CD4-positive, alpha-beta memory T cell (primary cell): ENCODE measurements at regions of chr17 and their contacts with region 1.

Region 1: DNA sequence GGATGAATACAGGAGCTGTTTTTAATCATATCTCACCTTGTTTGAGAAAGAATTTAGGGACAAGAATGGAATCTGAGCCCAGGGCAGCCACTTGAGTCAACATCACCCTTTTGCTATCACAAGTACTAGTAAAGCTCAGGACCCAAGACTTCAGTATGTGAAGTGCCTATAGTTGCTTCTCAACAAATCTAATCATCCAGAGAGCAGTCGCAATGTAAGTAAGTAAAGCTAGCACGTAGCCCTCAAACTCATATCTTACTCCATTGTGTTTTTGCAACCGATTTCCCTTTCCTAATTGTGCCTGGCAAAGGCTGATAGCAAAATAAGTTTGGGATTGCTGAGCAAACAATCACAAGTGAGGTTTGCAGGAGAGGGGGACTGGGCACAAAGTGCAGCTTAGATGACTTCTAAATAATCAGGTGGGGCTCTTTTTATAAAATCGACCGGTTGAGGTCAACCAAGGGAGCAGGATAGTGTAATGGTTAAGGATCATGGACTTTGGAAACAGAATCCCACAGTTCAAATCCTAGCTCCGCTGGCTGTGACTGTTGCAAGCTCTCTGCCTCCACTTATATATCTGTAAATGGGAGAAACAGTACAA is 13.0 kb downstream of the TOB1 start:
- DNase-seq: no peak
- H3K4me3 ChIP-seq: no peak overlapping the region
- H3K4me3 Mint-ChIP-seq: peak overlapping the region in 6 of 8 donors; percentile 70 to 87 (median 84)
- H3K27ac ChIP-seq: no peak overlapping the region
- H3K27ac Mint-ChIP-seq: peak overlapping the region; percentile 47 to 97 (median 92)
- H3K4me1 ChIP-seq: peaks cover 15% of the 10 kb centered on the region
- H3K4me1 Mint-ChIP-seq: peaks cover 12 to 20% (median 15%) of the 10 kb centered on the region in 4 donors
- H3K27me3 ChIP-seq: no peaks in the 10 kb centered on the region
- H3K27me3 Mint-ChIP-seq: no peaks in the 10 kb centered on the region

Region 2: DNA sequence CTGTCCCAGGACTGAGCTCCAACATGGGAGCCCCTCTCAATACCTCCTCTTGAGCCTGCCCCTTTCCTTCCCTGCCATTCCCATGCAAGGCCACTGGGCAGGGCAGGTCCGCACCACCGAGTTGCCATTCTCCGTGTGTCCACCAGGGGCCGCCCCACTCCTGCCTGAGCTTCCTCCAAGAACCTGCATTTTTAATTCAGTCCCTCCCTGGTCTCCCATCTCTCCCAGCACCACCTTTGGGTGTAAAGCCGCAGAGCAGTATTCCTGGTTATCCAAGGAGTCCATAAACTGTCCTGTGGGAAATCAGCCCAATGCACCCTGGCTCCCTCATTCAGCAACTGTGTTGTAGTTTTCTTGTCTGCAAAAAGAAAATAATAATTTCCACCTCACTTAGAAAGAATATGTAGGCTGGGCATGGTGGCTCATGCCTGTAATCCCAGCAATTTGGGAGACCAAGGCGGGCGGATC is 69.9 kb before region 1 on chr17:
- CTCF ChIA-PET with region 1: interaction called, 20 read pairs
- POLR2A ChIA-PET with region 1: no interaction called
- intact Hi-C with region 1: no loop called
- DNase-seq: peak; percentile 70 to 76 (median 72)
- H3K4me3 ChIP-seq: no peak overlapping the region
- H3K4me3 Mint-ChIP-seq: peak overlapping the region in 4 of 8 donors; percentile 45 to 75 (median 62)
- H3K27ac ChIP-seq: no peak overlapping the region
- H3K27ac Mint-ChIP-seq: peak overlapping the region in 3 of 7 donors; percentile 31 to 78 (median 43)
- H3K4me1 ChIP-seq: peaks cover 29% of the 10 kb centered on the region
- H3K4me1 Mint-ChIP-seq: peaks cover 20 to 42% (median 31%) of the 10 kb centered on the region in 4 donors
- H3K27me3 ChIP-seq: no peaks in the 10 kb centered on the region
- H3K27me3 Mint-ChIP-seq: peaks cover 5% of the 10 kb centered on the region in 2 donors

Region 3: DNA sequence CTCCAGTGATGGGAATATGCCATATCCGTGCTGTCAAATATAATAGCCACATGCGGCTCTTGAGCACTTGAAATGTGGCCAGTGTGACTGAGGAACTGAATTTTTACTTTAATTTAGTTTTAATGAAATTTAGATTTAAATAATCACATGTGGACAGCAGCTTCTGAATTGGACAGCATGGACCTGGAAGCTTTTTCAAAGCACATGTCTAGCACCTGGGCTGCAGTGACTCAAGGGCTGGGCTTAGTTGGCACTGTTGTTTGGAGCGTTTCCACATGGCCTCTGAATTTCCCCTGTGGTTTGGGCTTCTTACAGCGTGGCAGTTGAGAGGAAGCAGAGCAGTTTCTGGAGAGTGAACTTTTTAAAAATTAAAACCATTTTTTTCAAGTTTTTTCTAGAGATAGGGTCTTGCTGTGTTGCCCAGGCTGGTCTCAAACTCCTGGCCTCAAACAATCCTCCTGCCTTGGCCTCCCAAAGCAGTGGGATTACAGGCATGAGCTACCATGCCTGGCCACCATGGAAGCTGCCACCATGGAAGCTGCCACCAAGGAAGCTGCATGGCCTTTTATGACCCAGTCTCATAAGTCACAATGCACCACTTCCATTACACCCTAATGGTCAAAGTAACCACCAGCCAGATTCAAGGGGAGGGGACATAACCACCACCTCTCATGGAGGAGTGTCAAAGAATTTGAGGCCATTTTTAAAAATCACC is 19.8 kb after region 1 on chr17:
- CTCF ChIA-PET with region 1: interaction called, 102 read pairs
- POLR2A ChIA-PET with region 1: interaction called, 218 read pairs
- intact Hi-C with region 1: no loop called
- DNase-seq: peak; percentile 41 to 83 (median 52)
- H3K4me3 ChIP-seq: no peak overlapping the region
- H3K4me3 Mint-ChIP-seq: peak overlapping the region in 6 of 8 donors; percentile 8 to 76 (median 46)
- H3K27ac ChIP-seq: no peak overlapping the region
- H3K27ac Mint-ChIP-seq: peak overlapping the region in 5 of 7 donors; percentile 13 to 92 (median 42)
- H3K4me1 ChIP-seq: peaks cover 53% of the 10 kb centered on the region
- H3K4me1 Mint-ChIP-seq: peaks cover 30 to 53% (median 45%) of the 10 kb centered on the region in 4 donors
- H3K27me3 ChIP-seq: no peaks in the 10 kb centered on the region
- H3K27me3 Mint-ChIP-seq: no peaks in the 10 kb centered on the region

Region 4: DNA sequence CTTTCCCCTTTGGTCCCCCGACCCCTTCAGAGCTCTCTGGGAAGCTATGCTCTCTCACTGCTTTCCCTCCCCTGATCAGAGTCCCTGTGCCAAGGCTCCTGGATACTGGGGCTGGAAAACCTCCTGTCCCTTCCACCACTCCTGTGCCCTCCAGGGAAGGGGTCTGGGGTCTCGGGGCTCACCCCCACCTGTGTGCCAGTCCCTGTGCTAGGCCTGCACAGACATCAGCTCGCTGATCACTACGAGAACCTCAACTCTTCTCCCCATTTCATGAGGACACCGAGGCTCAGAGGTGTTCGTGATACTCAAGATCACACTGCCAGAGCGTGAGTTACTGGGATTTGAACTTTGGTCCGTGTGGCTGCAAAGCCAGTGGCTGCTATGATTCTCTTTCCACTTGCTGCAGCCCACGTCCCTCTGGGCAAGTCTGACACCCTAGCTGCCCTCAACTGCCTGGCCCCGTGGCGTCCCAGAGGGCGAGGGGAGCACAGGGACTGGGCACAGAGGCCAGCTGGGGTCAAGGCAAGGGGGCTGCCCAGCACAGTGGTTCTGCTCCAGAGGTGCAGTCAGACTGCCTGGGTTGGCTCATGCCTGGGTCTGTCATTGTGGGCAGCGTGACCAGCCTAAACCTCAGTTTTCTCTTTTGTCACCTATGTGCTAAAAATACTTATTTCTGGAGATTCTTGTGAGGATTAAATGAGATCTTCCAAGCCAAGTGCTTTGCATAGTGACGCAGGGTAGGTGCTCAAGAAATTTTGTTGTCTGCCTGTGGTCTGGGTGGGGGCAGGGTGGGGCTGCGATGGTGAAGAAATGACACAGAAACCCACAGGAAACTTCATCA is 56.9 kb after region 1 on chr17:
- CTCF ChIA-PET with region 1: interaction called, 14 read pairs
- POLR2A ChIA-PET with region 1: interaction called, 688 read pairs
- intact Hi-C with region 1: no loop called
- DNase-seq: peak in 4 of 5 donors; percentile 76 to 93 (median 82)
- H3K4me3 ChIP-seq: peak overlapping the region in 1 of 2 donors; percentile 30
- H3K4me3 Mint-ChIP-seq: peak overlapping the region in 7 of 8 donors; percentile 46 to 89 (median 73)
- H3K27ac ChIP-seq: peak overlapping the region; percentile 84
- H3K27ac Mint-ChIP-seq: peak overlapping the region; percentile 96 to 99 (median 99)
- H3K4me1 ChIP-seq: peaks cover 75% of the 10 kb centered on the region
- H3K4me1 Mint-ChIP-seq: peaks cover 37 to 73% (median 54%) of the 10 kb centered on the region in 4 donors
- H3K27me3 ChIP-seq: no peaks in the 10 kb centered on the region
- H3K27me3 Mint-ChIP-seq: no peaks in the 10 kb centered on the region

Region 5: DNA sequence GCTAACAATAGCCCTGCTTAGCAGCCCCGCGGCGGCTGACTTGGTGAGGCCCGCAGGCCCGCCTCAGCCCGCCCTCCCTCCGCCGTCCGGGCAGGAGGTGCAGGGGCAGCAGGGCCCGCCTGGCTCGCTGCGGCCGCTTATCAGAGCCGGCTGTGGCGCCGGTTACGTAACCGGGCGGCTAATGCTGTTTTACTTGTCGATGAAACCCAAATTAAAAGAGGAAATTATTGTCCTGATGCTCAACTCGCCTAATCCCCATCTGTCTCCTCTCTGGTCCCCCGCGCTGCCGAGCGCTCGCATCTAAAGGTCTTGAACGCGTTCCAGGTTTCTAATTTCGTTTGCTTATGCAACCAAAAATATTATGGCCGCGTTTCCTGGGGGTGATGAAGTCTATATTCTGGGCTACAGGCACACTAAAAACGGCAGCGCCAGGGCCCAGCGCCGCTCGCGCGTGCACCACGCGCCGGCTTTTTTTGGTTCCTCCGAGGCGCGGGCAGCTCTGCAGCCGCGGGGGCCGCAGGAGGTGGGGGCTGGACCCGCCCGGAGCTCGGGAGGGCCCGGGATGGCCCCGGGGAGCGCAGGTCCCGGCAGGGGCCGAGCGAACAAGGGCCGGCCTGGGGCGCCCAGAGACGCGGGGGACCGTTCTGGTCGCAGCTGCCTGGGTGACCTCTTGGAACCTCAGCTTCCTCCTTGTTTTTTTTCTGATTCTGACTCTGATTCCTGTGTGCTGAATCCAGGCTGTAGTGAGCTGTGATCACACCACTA is 78.2 kb after region 1 on chr17:
- CTCF ChIA-PET with region 1: interaction called, 8 read pairs
- POLR2A ChIA-PET with region 1: interaction called, 688 read pairs
- intact Hi-C with region 1: no loop called
- DNase-seq: peak; percentile 57 to 68 (median 61)
- H3K4me3 ChIP-seq: peak overlapping the region in 1 of 2 donors; percentile 45
- H3K4me3 Mint-ChIP-seq: peak overlapping the region; percentile 86 to 95 (median 88)
- H3K27ac ChIP-seq: peak overlapping the region; percentile 49
- H3K27ac Mint-ChIP-seq: peak overlapping the region; percentile 75 to 99 (median 96)
- H3K4me1 ChIP-seq: peaks cover 35% of the 10 kb centered on the region
- H3K4me1 Mint-ChIP-seq: peaks cover 14 to 63% (median 36%) of the 10 kb centered on the region in 4 donors
- H3K27me3 ChIP-seq: no peaks in the 10 kb centered on the region
- H3K27me3 Mint-ChIP-seq: no peaks in the 10 kb centered on the region

Region 6: DNA sequence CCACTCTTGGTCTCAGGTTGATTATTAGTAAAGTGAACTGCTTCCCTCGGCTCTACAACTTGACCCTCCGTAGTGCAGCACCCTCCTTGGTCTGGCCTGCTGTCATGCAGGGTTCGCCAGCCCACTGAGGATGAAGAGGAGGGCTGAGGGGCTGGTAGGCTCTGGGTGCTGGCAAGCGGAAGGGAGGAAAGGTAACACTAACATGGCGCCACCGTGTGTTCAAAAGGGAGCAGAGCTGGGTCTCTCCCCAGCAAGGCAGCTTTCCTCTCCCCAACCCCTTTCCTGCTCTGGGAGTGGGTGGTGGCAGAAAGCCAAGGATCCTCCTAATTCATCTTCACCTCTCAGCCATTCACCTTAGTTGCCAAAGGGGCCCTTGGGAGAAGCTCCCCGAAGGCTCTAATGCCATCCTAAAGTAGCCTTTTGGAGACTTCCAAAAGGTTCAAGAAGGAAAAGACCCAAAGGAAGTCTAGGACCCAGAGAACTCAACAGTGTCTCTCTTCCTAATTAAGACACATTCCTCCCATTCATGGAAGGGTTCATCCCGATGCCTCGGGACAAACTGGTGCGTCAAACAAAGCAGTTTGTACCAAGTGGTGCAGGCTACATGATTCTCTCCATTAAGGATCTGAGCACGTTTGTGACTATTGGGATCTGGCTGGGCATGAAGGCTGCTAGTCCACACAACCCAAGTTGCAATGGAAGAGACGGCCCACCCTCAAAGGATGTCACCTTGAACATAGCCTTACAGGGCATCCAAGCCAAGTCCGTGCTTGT is 103.8 kb after region 1 on chr17:
- CTCF ChIA-PET with region 1: interaction called, 515 read pairs
- POLR2A ChIA-PET with region 1: interaction called, 673 read pairs
- intact Hi-C with region 1: loop called (anchors 1 kb)
- DNase-seq: peak; percentile 64 to 69 (median 65)
- H3K4me3 ChIP-seq: no peak overlapping the region
- H3K4me3 Mint-ChIP-seq: peak overlapping the region in 2 of 8 donors; percentile 40 to 67
- H3K27ac ChIP-seq: no peak overlapping the region
- H3K27ac Mint-ChIP-seq: peak overlapping the region in 6 of 7 donors; percentile 32 to 89 (median 76)
- H3K4me1 ChIP-seq: peaks cover 4% of the 10 kb centered on the region
- H3K4me1 Mint-ChIP-seq: peaks cover 1 to 5% (median 4%) of the 10 kb centered on the region in 4 donors
- H3K27me3 ChIP-seq: no peaks in the 10 kb centered on the region
- H3K27me3 Mint-ChIP-seq: peaks cover 0 to 2% of the 10 kb centered on the region in 2 donors

Region 7: DNA sequence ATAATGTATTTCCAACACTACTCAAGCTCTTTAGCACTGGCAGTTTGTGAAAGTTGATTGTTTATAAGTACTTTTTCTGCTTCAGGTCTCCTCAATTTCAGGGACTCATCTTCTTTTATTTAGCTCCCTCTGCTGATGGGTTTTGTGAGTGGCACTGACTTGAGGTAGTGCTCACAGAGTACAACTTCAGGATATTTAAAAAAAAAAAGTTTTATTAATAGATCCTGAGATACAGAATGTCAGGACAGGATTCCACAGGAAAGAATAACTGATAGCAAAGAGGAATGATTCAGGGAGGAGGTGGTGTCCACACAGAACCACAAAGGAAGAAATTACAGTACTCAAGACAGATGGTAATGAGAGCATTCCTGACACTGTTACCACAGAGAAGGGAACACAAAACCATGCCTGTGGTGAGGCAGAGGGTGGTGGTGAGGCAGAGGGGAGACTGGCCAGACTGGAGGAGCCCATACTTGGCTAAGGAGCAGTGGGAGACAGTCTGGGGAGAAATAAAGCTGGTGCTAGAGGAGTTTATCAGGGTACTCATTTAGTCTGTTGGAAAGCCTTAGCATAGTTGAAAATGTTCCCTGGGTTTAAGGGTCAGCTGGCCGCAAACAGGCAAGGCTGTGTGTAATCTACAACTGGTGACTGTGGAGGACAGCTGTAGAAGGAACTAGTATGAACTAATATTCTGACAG is 203.8 kb after region 1 on chr17:
- CTCF ChIA-PET with region 1: interaction called, 5 read pairs
- POLR2A ChIA-PET with region 1: no interaction called
- intact Hi-C with region 1: loop called (anchors 10 kb)
- DNase-seq: peak; percentile 31 to 49 (median 43)
- H3K4me3 ChIP-seq: no peak overlapping the region
- H3K4me3 Mint-ChIP-seq: no peak overlapping the region
- H3K27ac ChIP-seq: no peak overlapping the region
- H3K27ac Mint-ChIP-seq: peak overlapping the region in 1 of 7 donors; percentile 19
- H3K4me1 ChIP-seq: no peaks in the 10 kb centered on the region
- H3K4me1 Mint-ChIP-seq: peaks cover 6 to 22% (median 13%) of the 10 kb centered on the region in 4 donors
- H3K27me3 ChIP-seq: no peaks in the 10 kb centered on the region
- H3K27me3 Mint-ChIP-seq: no peaks in the 10 kb centered on the region